MCF 10A (cell line): ENCODE measurements at regions of chr12 and their contacts with region 1.

Region 1: GRCh38 chr12:122399592-122400373 is 22.7 kb downstream of the CLIP1 start:
- DNase-seq: peak; percentile 96
- H3K4me3 Mint-ChIP-seq: peak overlapping the region; percentile 72
- H3K27ac Mint-ChIP-seq: peak overlapping the region; percentile 98
- H3K4me1 Mint-ChIP-seq: peaks cover 29% of the 10 kb centered on the region
- H3K27me3 Mint-ChIP-seq: no peaks in the 10 kb centered on the region
- CTCF ChIP-seq: peak; percentile 66

Region 2: GRCh38 chr12:122366685-122367475 is 32.9 kb before region 1 on chr12:
- CTCF ChIA-PET with region 1: no interaction called
- POLR2A ChIA-PET with region 1: interaction called, 21 read pairs
- intact Hi-C with region 1: no loop called
- DNase-seq: peak; percentile 86
- H3K4me3 Mint-ChIP-seq: peak overlapping the region; percentile 18
- H3K27ac Mint-ChIP-seq: peak overlapping the region; percentile 95
- H3K4me1 Mint-ChIP-seq: peaks cover 24% of the 10 kb centered on the region
- H3K27me3 Mint-ChIP-seq: no peaks in the 10 kb centered on the region
- CTCF ChIP-seq: no peak

Region 3: DNA sequence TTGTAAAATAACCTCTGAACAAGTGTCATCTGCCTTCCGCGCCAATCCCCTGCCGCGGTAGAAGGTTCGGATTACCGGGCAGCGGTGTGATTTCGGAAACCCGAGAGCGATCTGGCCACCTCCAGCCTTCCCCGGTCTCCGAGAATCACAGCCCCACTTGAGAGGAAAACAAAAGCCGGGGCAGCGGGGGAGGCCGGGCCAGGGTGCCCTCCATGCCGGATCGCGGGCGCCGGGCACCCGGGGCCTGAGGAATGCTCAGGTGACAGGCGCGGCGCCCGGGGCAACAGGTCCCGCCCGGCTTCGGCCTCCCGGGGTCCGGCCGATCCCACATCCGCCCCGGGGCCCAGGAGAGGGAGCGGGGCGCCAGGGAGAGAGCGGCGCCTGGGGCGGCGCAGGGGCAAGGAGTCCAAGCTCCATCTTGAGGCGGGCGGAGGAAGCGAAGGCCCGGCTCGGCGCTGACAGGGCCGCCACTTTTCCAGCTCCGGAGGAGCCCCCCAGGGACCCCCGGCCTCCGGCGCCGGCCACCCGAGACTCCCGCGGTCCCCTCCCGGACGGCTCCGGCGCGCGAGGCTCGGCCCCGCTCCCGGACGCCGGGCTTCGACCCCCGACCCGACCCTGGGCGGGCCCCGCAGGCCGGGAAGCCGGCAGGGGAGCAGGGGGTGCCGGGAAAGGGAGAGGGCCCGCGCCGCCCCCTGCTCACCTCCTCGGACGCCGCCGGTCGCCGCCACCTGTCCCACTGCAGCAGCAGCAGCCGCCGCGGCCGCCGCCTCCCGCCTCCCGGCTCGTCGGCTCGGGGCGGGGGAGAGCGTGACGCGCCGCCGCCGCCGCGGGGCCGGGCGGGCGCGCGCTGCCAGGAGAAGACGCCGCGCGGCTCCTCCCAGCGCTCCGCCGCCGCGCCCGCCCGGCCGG is 22.3 kb after region 1 on chr12 and contains the start of gene CLIP1:
- CTCF ChIA-PET with region 1: interaction called, 15 read pairs
- POLR2A ChIA-PET with region 1: interaction called, 145 read pairs
- intact Hi-C with region 1: loop called (anchors 1 kb)
- DNase-seq: peak; percentile 68
- H3K4me3 Mint-ChIP-seq: peak within 1 kb of the TSS; percentile 87
- H3K27ac Mint-ChIP-seq: peak within 1 kb of the TSS; percentile 95
- H3K4me1 Mint-ChIP-seq: peaks cover 4% of the 10 kb centered on the region
- H3K27me3 Mint-ChIP-seq: no peaks in the 10 kb centered on the region
- CTCF ChIP-seq: peak; percentile 66
- total RNA-seq, gene CLIP1: 92.6 and 115 TPM in 2 replicates

Region 4: GRCh38 chr12:122437656-122438121 is 37.9 kb after region 1 on chr12:
- CTCF ChIA-PET with region 1: interaction called, 10 read pairs
- POLR2A ChIA-PET with region 1: interaction called, 13 read pairs
- intact Hi-C with region 1: no loop called
- DNase-seq: peak; percentile 88
- H3K4me3 Mint-ChIP-seq: peak overlapping the region; percentile 13
- H3K27ac Mint-ChIP-seq: no peak overlapping the region
- H3K4me1 Mint-ChIP-seq: peaks cover 22% of the 10 kb centered on the region
- H3K27me3 Mint-ChIP-seq: no peaks in the 10 kb centered on the region
- CTCF ChIP-seq: no peak

Region 5: DNA sequence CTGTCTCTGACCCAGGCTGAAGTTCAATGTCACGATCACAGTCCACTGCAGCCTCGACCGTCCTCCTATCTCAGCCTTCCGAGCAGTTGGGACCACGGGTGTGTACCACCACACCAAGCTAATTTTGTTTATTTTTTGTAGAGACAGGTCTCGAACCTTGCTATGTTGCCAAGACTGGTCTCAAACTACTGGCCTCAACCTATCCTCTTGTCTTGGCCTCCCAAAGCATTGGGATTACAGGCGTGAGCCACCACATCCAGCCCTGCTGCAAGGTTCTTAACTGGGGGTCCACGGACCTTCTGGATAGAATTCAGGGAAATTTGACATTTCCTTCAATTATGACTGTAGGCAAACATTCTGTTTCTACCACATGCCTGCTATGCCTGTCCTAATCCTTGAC is 64.0 kb after region 1 on chr12:
- CTCF ChIA-PET with region 1: interaction called, 127 read pairs
- POLR2A ChIA-PET with region 1: interaction called, 292 read pairs
- intact Hi-C with region 1: no loop called
- DNase-seq: no peak
- H3K4me3 Mint-ChIP-seq: no peak overlapping the region
- H3K27ac Mint-ChIP-seq: peak overlapping the region; percentile 91
- H3K4me1 Mint-ChIP-seq: no peaks in the 10 kb centered on the region
- H3K27me3 Mint-ChIP-seq: no peaks in the 10 kb centered on the region
- CTCF ChIP-seq: no peak

Region 6: DNA sequence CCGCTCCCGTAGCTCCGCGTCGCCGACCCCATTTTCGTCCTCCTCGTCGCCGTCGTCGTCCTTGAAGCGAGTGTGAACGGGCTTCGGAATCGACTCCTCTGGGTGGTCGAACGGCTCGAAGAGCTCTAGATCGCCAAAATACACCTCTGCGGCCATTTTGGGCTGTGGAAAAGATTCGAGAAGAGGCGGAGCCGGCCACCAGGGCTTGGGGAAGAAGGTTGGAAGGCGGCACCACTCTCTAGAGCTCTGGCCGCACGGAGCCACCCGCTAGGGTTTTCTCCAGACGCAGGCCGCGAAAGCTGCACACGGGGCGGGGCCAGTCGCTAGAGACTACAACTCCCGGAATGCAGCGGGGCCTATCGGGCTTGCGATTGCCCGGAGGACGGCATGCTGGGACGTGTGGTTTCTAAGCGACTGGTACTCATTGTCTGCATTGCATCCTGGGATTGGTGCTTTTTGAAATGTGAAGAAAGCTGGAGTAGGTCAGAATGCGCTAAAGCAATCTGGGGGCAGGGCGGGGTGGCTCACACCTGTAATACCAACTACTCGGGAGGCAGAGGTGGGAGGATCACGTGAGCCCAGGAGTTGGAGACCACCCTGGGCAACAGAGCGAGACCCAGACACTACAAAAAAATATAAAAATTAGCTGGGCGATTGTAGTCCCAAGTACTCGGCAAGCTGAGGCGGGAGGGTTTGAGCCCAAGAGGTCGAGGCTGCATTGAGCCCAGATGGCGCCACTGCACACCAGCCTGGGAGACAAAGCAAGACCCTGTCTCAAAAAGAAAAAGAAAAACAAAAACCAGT is 101.1 kb after region 1 on chr12 and contains the start of gene ZCCHC8:
- CTCF ChIA-PET with region 1: interaction called, 27 read pairs
- POLR2A ChIA-PET with region 1: interaction called, 111 read pairs
- intact Hi-C with region 1: loop called (anchors 1 kb)
- DNase-seq: peak; percentile 99
- H3K4me3 Mint-ChIP-seq: peak within 1 kb of the TSS; percentile 93
- H3K27ac Mint-ChIP-seq: peak within 1 kb of the TSS; percentile 96
- H3K4me1 Mint-ChIP-seq: peaks cover 11% of the 10 kb centered on the region
- H3K27me3 Mint-ChIP-seq: no peaks in the 10 kb centered on the region
- CTCF ChIP-seq: no peak
- total RNA-seq, gene ZCCHC8: 33.4 and 41.8 TPM in 2 replicates